A549 (cell line): ENCODE measurements at regions of chr12 and their contacts with region 1.

Region 1: GRCh38 chr12:123580772-123581171 is 3.6 kb upstream of the TMED2 start:
- DNase-seq: no peak
- ATAC-seq: no peak
- H3K4me3 ChIP-seq: no peak overlapping the region
- H3K27ac ChIP-seq: no peak overlapping the region
- H3K4me1 ChIP-seq: peaks cover 12% of the 10 kb centered on the region
- CTCF ChIP-seq: no peak
- EP300 ChIP-seq: no peak
- POLR2A ChIP-seq: no peak
- RAD21 ChIP-seq: no peak

Region 2: DNA sequence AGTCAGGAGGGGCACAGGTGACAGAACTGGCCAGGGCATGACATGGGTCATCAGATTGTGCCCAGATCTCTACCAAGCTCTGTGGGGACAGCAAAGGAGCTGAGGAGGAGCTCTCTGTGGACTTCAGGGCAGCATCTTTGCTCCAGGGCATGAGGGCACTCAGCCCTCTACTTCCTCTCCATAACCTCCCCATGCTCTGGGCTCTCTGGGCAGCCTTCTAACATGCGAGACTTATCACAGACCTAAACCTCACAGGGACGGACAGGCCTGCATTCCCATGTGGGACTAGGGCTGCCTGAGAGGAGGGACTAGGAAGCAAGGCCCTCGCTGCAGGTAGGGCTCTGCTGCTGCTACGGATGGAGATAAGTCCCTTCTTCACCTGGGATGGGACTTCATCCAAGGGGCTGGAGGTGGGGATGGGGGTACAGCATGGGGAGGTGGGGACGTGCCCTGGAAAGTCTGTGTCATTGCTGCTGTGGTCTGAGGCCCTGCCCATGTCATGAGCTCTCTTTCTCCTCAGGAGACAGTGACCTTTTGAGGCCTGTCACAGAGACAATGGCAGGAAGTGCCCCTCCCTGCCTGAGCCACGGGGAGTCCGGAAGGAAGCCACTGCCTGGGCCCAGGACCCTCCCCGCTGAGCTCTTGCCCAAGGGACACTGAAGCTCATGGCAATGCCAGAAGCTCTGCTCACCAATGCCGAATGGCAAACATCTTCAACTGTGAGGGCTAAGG is 474.0 kb before region 1 on chr12:
- CTCF ChIA-PET with region 1: no interaction called
- POLR2A ChIA-PET with region 1: no interaction called
- DNase-seq: peak in 1 of 2 experiments; percentile 39
- ATAC-seq: no peak
- H3K4me3 ChIP-seq: no peak overlapping the region
- H3K27ac ChIP-seq: peak overlapping the region; percentile 20 to 66; a peak in 3 of 6 replicates
- H3K4me1 ChIP-seq: peaks cover 36% of the 10 kb centered on the region
- CTCF ChIP-seq: no peak
- EP300 ChIP-seq: no peak
- POLR2A ChIP-seq: no peak
- RAD21 ChIP-seq: no peak

Region 3: DNA sequence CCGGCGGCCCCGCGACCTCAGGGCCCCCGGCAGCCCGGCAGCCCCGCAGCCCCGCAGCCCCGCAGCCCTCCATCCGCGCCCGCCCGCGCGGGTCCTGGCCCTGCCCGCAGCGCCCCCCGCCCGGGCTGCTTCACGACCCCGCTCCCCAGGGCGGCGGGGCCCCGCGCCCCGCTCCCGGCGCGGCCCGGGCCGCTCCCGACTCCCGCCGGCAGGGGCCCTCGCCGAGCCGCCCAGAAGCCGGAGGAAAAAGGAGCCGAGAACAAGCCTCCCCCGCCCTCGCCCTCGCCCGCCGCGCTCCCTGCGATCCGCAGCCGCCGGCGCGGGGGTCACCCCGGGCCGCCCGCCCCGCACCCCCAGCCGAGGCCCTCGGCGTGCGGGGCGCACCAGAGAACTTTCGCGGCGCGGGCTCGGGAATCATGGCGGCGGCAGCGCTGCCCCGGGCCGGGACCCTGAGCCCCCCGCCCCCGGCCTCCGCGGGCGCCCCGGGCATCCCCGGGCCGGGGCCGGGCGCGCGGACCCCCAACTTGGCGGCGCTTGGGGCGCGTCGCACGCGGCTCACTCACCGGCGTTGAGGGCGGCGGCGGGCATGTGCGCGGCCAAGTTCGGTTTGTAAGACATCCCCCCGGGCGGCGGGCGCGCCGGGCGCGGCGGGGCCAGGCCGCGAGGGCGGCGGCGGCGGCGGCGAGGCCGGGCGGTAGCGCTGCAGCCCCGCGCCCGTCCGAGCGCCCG is 309.6 kb before region 1 on chr12:
- CTCF ChIA-PET with region 1: interaction called, 12 read pairs
- POLR2A ChIA-PET with region 1: no interaction called
- DNase-seq: peak; percentile 57 to 76
- ATAC-seq: peak; percentile 70 to 86
- H3K4me3 ChIP-seq: peak overlapping the region; percentile 94
- H3K27ac ChIP-seq: peak overlapping the region; percentile 96 to 100
- H3K4me1 ChIP-seq: peaks cover 16% of the 10 kb centered on the region
- CTCF ChIP-seq: peak; percentile 71
- EP300 ChIP-seq: no peak
- POLR2A ChIP-seq: no peak; the same call in 1 of the 2 replicates
- RAD21 ChIP-seq: peak; percentile 55 to 74

Region 4: DNA sequence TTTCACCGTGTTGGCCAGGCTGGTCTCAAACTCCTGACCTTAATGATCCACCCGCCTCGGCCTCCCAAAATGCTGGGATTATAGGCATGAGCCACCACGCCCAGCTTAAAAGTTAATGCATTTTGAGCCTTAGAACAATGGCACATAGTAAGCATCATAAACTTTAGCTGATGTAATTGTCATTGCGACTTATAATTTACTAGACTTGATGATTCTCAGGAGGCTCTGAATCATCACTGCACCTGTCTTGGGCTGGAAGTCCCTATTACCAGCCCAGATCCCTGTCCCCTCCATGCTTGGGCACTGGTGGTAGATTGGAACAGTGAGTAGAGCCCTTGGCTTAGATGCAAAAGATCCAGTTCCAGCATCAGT is 170.7 kb before region 1 on chr12:
- CTCF ChIA-PET with region 1: interaction called, 10 read pairs
- POLR2A ChIA-PET with region 1: no interaction called
- DNase-seq: no peak
- ATAC-seq: no peak
- H3K4me3 ChIP-seq: no peak overlapping the region
- H3K27ac ChIP-seq: no peak overlapping the region
- H3K4me1 ChIP-seq: no peaks in the 10 kb centered on the region
- CTCF ChIP-seq: no peak
- EP300 ChIP-seq: no peak
- POLR2A ChIP-seq: no peak
- RAD21 ChIP-seq: no peak

Region 5: DNA sequence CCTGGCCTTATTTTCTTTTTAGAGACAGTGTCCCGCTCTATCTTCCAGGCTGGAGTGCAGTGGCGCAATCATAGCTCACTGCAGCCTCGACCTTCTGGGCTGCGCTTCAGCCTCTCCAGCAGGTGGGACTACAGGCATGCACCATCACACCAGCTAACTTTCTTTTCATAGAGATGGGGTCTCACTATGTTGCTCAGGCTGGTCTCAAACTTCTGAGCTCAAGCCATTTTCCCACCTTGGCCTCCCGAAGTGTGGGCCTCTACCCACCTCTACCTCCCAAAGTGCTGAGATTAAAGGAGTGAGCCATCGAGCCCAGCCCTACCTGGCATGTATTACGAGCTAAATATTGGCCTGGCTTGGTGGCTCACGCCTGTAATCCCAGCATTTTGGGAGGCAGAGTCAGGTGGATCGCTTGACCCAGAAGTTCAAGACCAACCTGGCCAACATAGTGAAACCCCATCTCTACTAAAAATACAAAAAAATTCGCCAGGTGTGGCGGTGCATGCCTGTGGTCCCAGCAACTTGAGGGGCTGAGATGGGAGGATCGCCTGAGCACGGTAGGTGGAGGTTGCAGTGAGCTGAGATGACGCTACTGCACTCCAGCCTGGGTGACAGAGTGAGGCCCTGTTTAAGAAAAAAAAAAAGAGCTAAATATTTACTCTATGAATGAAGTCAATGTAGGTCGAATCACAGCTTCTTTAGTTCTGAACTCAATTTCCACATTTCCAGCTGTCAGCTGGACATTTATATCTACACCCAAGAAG is 39.7 kb before region 1 on chr12:
- CTCF ChIA-PET with region 1: interaction called, 10 read pairs
- POLR2A ChIA-PET with region 1: no interaction called
- DNase-seq: no peak
- ATAC-seq: peak in 1 of 2 experiments; percentile 52; a peak in 3 of 6 replicates
- H3K4me3 ChIP-seq: no peak overlapping the region
- H3K27ac ChIP-seq: no peak overlapping the region
- H3K4me1 ChIP-seq: no peaks in the 10 kb centered on the region
- CTCF ChIP-seq: no peak
- EP300 ChIP-seq: no peak
- POLR2A ChIP-seq: no peak
- RAD21 ChIP-seq: no peak

Region 6: DNA sequence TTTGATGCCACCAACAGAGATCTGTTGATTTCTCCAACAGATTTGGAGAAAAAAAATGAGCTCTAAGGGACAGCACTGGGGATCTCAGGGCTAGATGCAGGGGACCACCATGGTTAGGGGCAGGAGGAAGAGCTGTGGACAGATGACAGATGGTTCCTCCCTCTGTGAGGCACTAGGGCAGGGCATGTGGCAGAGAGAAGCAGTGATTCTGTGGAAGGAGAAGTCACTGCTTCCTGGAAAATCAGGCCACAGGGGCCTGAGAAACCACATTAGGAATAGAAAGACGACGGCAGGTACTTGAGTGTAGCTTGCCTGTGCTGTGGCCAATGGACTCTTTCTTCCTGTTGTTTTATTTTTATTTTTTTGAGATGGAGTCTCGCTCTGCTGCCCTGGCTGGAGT is 21.3 kb before region 1 on chr12:
- CTCF ChIA-PET with region 1: interaction called, 12 read pairs
- POLR2A ChIA-PET with region 1: no interaction called
- DNase-seq: no peak
- ATAC-seq: peak in 1 of 2 experiments; percentile 40; a peak in 2 of 6 replicates
- H3K4me3 ChIP-seq: no peak overlapping the region
- H3K27ac ChIP-seq: no peak overlapping the region
- H3K4me1 ChIP-seq: no peaks in the 10 kb centered on the region
- CTCF ChIP-seq: no peak
- EP300 ChIP-seq: no peak
- POLR2A ChIP-seq: no peak
- RAD21 ChIP-seq: no peak

Region 7: DNA sequence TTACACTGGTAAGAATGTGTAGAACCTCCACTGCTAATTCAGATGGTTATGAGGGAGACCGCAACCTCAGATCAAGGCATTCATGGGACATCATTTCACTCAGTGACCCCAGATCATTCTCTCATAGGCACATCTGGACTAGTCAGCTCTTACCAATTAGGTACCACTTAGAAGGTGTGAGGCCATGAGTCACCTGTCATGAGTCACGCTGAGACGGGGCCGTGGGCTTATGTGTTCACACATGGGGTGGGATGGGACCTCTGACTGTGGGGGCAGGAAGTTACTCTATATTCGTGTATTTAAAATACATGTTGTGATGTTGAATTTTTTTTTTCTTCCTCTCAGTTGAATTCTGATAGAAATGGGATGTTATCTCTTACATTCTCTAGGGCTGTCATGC is 336.0 kb after region 1 on chr12:
- CTCF ChIA-PET with region 1: no interaction called
- POLR2A ChIA-PET with region 1: no interaction called
- DNase-seq: no peak
- ATAC-seq: no peak
- H3K4me3 ChIP-seq: no peak overlapping the region
- H3K27ac ChIP-seq: no peak overlapping the region
- H3K4me1 ChIP-seq: no peaks in the 10 kb centered on the region
- CTCF ChIP-seq: no peak
- EP300 ChIP-seq: no peak
- POLR2A ChIP-seq: no peak
- RAD21 ChIP-seq: no peak